ENCODE measurements at regions of chr2 and their contacts with region 1.

Region 1: DNA sequence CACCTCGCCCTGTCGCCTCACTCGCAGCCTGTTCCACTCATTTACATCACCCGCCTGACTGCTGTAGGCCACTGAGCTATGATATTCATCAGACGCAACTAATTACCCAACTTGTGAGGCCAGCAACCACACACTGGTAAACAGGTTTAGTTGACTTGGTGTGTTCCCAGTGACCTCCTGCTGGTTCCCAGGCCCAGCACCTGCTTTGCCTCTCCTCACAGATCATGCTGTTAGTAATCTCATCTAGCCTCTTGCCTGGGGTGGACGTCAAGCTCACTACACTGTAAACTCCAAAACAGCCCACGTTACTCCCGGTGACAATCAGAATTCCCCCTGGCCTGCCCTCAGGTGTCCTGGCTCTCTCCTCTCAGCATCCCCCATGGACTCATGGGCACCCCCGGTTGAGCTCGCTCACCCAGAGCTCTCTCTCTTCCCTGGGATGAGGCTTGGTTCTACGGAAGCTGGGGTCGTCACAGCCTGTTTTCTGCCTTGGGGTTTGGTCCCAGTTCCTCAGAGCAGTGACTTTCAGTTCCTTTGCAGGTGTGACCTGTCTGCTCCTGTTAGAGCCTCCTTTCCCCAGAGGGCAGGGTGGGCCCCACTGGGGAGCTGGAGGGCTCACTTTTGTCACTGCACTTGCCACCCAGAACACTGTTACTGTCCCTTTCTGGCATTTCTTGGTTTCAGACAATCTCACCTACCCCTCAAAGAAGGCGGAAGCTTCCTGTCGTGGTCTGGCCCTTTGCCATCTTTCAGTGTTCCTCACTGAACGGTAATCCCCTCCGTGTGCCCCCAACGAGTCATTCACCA is 40.3 kb downstream of the INPP5D start:
- DNase-seq: peak; percentile 76
- ATAC-seq: peak; percentile 85
- H3K4me3 Mint-ChIP-seq: peak overlapping the region; percentile 79
- H3K27ac Mint-ChIP-seq: peak overlapping the region; percentile 98
- H3K4me1 Mint-ChIP-seq: peaks cover 90% of the 10 kb centered on the region
- H3K27me3 Mint-ChIP-seq: no peaks in the 10 kb centered on the region
- CTCF ChIP-seq: no peak

Region 2: GRCh38 chr2:232910376-232910775 is 190.0 kb before region 1 on chr2:
- CTCF ChIA-PET with region 1: no interaction called
- POLR2A ChIA-PET with region 1: no interaction called
- intact Hi-C with region 1: no loop called
- DNase-seq: no peak
- ATAC-seq: no peak
- H3K4me3 Mint-ChIP-seq: no peak overlapping the region
- H3K27ac Mint-ChIP-seq: no peak overlapping the region
- H3K4me1 Mint-ChIP-seq: no peaks in the 10 kb centered on the region
- H3K27me3 Mint-ChIP-seq: peaks cover 29% of the 10 kb centered on the region
- CTCF ChIP-seq: no peak

Region 3: DNA sequence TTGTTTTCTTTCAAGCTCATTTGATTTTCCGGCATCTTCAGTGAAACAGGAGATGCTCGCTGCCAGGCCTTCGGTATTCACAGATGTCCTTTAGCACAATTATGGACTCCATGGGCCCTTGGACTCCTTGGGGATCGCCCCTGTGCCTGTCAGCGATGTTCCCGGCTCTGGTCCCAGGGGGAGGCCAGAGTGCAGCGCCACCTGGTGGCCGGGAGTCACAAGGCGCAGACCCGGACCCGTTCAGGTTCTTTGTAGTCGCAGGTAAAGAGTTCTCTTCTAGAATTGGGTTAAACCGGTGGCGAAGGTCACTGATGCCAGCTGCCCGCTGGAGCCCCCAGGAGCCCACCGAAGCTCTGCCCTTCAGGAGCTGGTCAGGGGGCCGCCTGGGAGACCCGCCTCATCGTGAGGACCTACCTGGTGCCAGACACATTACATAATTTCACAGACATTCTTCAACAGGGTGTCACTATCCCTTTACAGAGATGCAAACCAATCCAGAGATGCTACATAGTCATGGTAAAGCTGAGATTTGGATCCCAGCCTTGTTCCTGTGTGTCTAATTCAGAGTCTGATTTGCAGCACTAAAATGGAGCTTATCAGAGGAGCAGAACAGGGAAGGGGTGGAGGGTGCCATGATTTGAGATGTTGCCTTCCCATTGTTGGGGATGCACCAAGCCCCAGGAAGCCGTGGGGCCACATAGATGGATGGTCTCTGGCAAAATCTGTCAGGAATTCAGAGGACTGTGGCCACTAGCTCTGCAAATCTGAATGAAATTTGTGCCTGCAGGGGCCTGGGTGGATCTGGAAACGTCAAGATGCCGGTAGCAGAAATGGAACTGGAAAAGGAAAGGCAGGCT is 46.2 kb before region 1 on chr2:
- CTCF ChIA-PET with region 1: interaction called, 16 read pairs
- POLR2A ChIA-PET with region 1: interaction called, 308 read pairs
- intact Hi-C with region 1: no loop called
- DNase-seq: peak; percentile 72
- ATAC-seq: peak; percentile 74
- H3K4me3 Mint-ChIP-seq: no peak overlapping the region
- H3K27ac Mint-ChIP-seq: peak overlapping the region; percentile 32
- H3K4me1 Mint-ChIP-seq: peaks cover 16% of the 10 kb centered on the region
- H3K27me3 Mint-ChIP-seq: peaks cover 3% of the 10 kb centered on the region
- CTCF ChIP-seq: peak; percentile 65

Region 4: DNA sequence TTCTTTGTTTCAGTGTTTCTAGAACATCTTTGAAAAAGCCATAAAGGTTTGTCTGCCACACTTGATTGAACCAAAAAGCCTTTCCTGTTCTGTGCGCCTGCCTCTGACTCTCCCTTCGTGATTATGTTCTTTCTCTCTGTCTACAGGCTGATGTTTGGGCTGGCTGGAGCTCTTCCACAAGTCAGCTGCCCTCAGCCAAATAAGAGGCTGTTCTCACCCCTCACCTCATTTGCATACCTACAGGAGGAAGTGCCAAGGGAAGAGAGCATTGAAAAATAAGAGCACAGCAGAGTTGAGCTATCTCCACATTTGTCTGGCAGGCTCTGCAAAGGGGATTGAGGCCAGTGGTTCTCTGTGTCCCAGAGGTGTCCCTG is 24.4 kb before region 1 on chr2:
- CTCF ChIA-PET with region 1: interaction called, 32 read pairs
- POLR2A ChIA-PET with region 1: interaction called, 319 read pairs
- intact Hi-C with region 1: loop called (anchors 1 kb)
- DNase-seq: no peak
- ATAC-seq: peak; percentile 73
- H3K4me3 Mint-ChIP-seq: no peak overlapping the region
- H3K27ac Mint-ChIP-seq: no peak overlapping the region
- H3K4me1 Mint-ChIP-seq: peaks cover 47% of the 10 kb centered on the region
- H3K27me3 Mint-ChIP-seq: no peaks in the 10 kb centered on the region
- CTCF ChIP-seq: no peak

Region 5: GRCh38 chr2:233084488-233084887 is 15.9 kb before region 1 on chr2:
- CTCF ChIA-PET with region 1: interaction called, 32 read pairs
- POLR2A ChIA-PET with region 1: interaction called, 319 read pairs
- intact Hi-C with region 1: loop called (anchors 1 kb)
- DNase-seq: no peak
- ATAC-seq: no peak
- H3K4me3 Mint-ChIP-seq: peak overlapping the region; percentile 75
- H3K27ac Mint-ChIP-seq: peak overlapping the region; percentile 98
- H3K4me1 Mint-ChIP-seq: peaks cover 97% of the 10 kb centered on the region
- H3K27me3 Mint-ChIP-seq: no peaks in the 10 kb centered on the region
- CTCF ChIP-seq: no peak

Region 6: DNA sequence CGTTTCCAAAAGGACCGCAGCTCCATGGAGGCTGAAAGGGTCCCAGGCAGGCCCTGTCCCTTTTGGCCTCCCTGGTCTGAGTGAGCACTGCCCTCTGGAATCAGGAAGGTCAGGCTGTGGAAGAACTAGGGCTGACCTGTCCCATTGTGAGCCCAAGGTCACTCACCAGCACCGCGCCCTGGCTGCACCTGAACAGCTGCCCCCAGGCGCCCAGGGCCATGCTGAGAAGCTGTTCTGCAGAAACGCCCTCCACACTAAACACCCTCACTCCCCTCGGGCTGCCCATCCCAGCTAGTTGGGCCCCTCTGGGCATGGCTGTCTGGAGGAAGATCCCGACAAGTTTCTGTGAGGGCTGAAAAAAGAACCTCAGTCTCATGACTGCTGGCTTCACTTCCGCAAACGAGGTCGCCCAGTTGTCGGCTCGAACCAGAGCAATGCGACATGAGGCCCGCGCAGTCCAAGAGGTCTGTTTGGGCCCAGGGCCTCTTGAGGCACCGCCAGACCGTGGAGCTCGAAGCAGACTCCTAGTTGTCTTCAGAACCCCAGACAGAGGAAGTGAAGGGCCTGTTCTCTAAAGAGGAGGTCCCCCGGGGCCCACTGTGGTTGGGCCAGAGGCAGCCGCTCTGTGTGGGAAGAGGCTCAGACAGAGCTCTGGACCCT is 24.2 kb after region 1 on chr2:
- CTCF ChIA-PET with region 1: interaction called, 8 read pairs
- POLR2A ChIA-PET with region 1: interaction called, 56 read pairs
- intact Hi-C with region 1: loop called (anchors 1 kb)
- DNase-seq: peak; percentile 73
- ATAC-seq: peak; percentile 97
- H3K4me3 Mint-ChIP-seq: peak overlapping the region; percentile 78
- H3K27ac Mint-ChIP-seq: peak overlapping the region; percentile 92
- H3K4me1 Mint-ChIP-seq: peaks cover 52% of the 10 kb centered on the region
- H3K27me3 Mint-ChIP-seq: no peaks in the 10 kb centered on the region
- CTCF ChIP-seq: no peak

Region 7: GRCh38 chr2:233202531-233202944 is 102.1 kb after region 1 on chr2:
- CTCF ChIA-PET with region 1: no interaction called
- POLR2A ChIA-PET with region 1: interaction called, 12 read pairs
- intact Hi-C with region 1: no loop called
- DNase-seq: no peak
- ATAC-seq: peak; percentile 69
- H3K4me3 Mint-ChIP-seq: peak overlapping the region; percentile 53
- H3K27ac Mint-ChIP-seq: peak overlapping the region; percentile 88
- H3K4me1 Mint-ChIP-seq: peaks cover 41% of the 10 kb centered on the region
- H3K27me3 Mint-ChIP-seq: no peaks in the 10 kb centered on the region
- CTCF ChIP-seq: no peak

Region 8: GRCh38 chr2:233331536-233331935 is 231.1 kb after region 1 on chr2:
- CTCF ChIA-PET with region 1: no interaction called
- POLR2A ChIA-PET with region 1: interaction called, 4 read pairs
- intact Hi-C with region 1: loop called (anchors 2 kb)
- DNase-seq: peak; percentile 68
- ATAC-seq: peak; percentile 91
- H3K4me3 Mint-ChIP-seq: peak overlapping the region; percentile 42
- H3K27ac Mint-ChIP-seq: peak overlapping the region; percentile 97
- H3K4me1 Mint-ChIP-seq: peaks cover 82% of the 10 kb centered on the region
- H3K27me3 Mint-ChIP-seq: no peaks in the 10 kb centered on the region
- CTCF ChIP-seq: no peak

Region 9: DNA sequence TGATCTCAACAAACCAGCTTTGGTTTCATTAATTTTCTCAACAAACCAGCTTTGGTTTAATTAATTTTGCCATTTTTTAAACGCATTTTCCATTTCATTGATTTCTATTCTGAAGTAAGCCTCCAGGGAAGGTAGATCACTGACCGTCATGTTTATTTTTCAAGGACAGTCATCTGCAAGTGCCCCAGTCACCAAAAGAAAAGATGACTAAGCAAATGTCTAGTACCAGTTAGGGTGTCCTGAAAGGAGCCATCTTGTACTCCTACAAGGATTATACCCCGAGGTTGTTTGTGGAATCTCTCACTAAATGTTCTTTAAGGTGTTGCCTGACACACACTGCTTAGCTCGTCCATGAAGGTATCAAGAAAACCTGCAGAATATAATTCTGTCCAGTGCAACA is 510.9 kb after region 1 on chr2:
- CTCF ChIA-PET with region 1: no interaction called
- POLR2A ChIA-PET with region 1: no interaction called
- intact Hi-C with region 1: no loop called
- DNase-seq: no peak
- ATAC-seq: no peak
- H3K4me3 Mint-ChIP-seq: no peak overlapping the region
- H3K27ac Mint-ChIP-seq: no peak overlapping the region
- H3K4me1 Mint-ChIP-seq: no peaks in the 10 kb centered on the region
- H3K27me3 Mint-ChIP-seq: peaks cover 20% of the 10 kb centered on the region
- CTCF ChIP-seq: no peak

Measured in activated B cell treated with CpG ODN at 0.5 μM for 24 hours (primary cell).